ENCODE measurements at regions of chr5 and their contacts with region 1.

Region 1: DNA sequence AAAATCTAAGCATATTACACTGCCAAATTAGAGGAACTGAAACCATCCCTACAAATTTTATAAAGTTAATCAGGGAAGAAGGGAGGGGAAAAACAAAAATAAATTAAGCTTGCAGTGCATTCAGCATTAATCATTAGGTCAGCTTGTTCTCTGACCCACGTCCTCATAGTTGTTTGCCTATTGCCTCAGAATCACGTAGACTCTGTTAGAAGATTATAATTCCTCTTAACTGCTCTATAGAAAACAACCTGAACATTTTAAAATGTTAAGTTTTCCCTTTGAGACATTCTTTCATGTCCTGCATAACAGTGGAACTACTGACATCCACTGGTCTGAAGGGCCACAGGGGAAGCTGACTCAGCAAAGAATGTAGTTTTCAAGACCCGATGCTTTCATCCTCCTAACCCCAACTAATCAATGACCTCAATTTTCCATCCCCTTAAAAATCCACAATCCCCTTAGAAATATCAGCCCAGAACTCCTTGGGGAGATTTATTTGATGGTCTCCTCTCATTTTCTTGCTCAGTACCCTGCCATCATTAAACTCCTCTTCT is 112.4 kb downstream of the FBXO4 start:
- DNase-seq: no peak
- H3K4me3 ChIP-seq: no peak overlapping the region
- H3K4me3 Mint-ChIP-seq: no peak overlapping the region
- H3K27ac Mint-ChIP-seq: no peak overlapping the region
- H3K4me1 ChIP-seq: no peaks in the 10 kb centered on the region
- H3K4me1 Mint-ChIP-seq: no peaks in the 10 kb centered on the region
- H3K27me3 ChIP-seq: no peaks in the 10 kb centered on the region
- H3K27me3 Mint-ChIP-seq: peaks cover 7% of the 10 kb centered on the region
- CTCF ChIP-seq: no peak

Region 2: GRCh38 chr5:42108470-42108869 is 71.0 kb after region 1 on chr5:
- CTCF ChIA-PET with region 1: no interaction called
- POLR2A ChIA-PET with region 1: no interaction called
- intact Hi-C with region 1: loop called (anchors 2 kb)
- DNase-seq: no peak
- H3K4me3 ChIP-seq: no peak overlapping the region
- H3K4me3 Mint-ChIP-seq: no peak overlapping the region
- H3K27ac Mint-ChIP-seq: no peak overlapping the region
- H3K4me1 ChIP-seq: peaks cover 14% of the 10 kb centered on the region
- H3K4me1 Mint-ChIP-seq: no peaks in the 10 kb centered on the region
- H3K27me3 ChIP-seq: no peaks in the 10 kb centered on the region
- H3K27me3 Mint-ChIP-seq: no peaks in the 10 kb centered on the region
- CTCF ChIP-seq: no peak

Measured in Caco-2 (cell line).